ENCODE measurements at regions of chr19 and their contacts with region 1.

Region 1: GRCh38 chr19:54172471-54173358 is at the start of gene TMC4:
- DNase-seq: no peak
- ATAC-seq: peak in 3 of 4 donors; percentile 25 to 51 (median 33)
- H3K4me3 ChIP-seq: no peak within 1 kb of the TSS
- H3K27ac ChIP-seq: no peak within 1 kb of the TSS
- H3K4me1 ChIP-seq: no peaks in the 10 kb centered on the region
- H3K27me3 ChIP-seq: no peaks in the 10 kb centered on the region
- CTCF ChIP-seq: peak in 1 of 4 donors; percentile 13
- POLR2A ChIP-seq: no peak
- total RNA-seq, gene TMC4: 0.18 to 2.4 (median 1.1) TPM

Region 2: DNA sequence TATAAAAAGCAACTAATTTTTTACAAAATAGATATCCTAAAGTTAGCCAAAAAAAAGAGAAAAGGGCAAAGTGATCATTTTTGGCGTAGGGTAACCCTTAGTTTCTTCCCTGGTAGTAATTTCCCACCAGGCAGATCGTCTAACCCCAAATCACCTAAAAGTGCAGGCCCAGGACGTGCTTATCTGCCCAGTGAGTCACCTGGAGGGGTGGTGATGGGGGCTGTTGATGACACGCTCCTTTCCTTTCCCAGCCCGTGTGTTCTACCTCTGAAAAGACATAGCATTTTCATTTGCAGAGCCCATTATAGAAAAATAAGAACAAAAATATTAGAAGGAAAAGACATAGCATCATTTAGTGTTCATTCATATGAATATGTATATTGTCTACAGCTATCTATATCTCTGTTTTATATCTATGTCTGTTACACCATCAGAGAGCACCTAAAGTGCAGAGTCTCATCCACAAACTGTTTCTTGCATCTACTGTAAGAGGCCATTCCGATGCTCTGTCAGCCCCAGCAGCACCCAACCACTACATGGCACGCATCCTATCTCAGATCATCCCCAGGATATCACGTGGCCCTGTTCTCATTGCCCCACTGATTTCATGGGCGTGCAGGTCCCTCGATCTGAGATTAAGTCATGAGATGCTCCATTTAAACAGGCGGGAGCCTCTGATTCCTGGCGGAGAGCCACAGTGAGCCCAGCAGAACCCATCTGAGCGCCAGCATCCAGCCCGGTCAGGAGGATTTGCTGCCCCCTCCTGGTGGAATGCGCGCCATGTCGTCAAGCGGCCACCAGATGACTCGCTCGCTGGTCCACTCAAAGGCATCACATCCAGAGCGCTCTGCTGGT is 58.6 kb after region 1 on chr19:
- intact Hi-C with region 1: loop called (anchors 5 kb)
- DNase-seq: peak; percentile 88 to 91 (median 90)
- ATAC-seq: peak; percentile 99 to 100 (median 100)
- H3K4me3 ChIP-seq: no peak overlapping the region
- H3K27ac ChIP-seq: no peak overlapping the region
- H3K4me1 ChIP-seq: no peaks in the 10 kb centered on the region
- H3K27me3 ChIP-seq: no peaks in the 10 kb centered on the region
- CTCF ChIP-seq: peak; percentile 89 to 97 (median 90)
- POLR2A ChIP-seq: no peak

Measured in right lobe of liver (tissue), 6 donors.